GM12878 (cell line): ENCODE measurements at regions of chr15 and their contacts with region 1.

Region 1: GRCh38 chr15:94582369-94582768 is 351.0 kb downstream of the MCTP2 start:
- DNase-seq: peak; percentile 9
- ATAC-seq: peak; percentile 71
- H3K4me3 ChIP-seq: no peak overlapping the region
- H3K27ac ChIP-seq: no peak overlapping the region
- H3K4me1 ChIP-seq: peaks cover 17% of the 10 kb centered on the region; the same call in 1 of the 2 replicates
- H3K27me3 ChIP-seq: no peaks in the 10 kb centered on the region; a peak in 2 of 4 replicates
- CTCF ChIP-seq: peak; percentile 43 to 65 (median 48); a peak in 4 of 6 replicates
- EP300 ChIP-seq: no peak
- POLR2A ChIP-seq: no peak
- RAD21 ChIP-seq: peak; percentile 54

Region 2: DNA sequence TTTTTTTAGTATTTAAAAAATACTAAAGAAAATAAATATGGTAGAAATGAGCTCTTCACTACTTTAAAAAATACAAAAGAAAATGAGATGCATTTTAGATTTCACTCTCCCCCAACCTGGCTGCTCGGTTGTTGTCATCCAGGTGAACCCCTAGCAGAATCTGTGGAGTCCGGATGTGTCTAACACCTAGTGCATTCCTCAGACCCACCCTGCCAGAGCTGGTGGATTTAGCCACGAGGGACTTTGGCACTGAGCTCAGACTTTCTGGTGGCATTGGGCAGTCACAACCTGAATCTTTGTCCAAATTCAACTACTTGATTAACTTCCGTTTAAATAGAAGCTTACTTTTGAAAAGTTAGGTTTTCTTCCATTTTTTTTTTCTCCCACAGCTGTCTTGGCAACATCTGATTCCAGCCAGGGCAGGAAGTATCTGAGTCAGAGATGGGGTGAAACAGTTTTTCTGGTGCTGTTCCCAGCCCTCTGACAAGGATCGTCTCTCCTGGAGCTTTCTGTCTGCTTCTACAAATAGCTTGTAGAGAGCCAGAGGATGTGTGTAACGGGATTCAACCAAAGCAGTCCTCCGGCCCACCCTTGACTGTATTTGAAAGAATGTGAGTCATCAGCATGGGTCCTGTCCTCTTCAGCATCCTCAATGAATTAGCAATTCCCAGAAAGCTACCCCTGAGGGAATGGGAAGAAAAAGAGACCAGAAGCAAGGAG is 652.8 kb before region 1 on chr15:
- CTCF ChIA-PET with region 1: no interaction called
- POLR2A ChIA-PET with region 1: no interaction called
- RAD21 ChIA-PET with region 1: no interaction called
- SMC1A ChIA-PET with region 1: no interaction called
- in situ Hi-C with region 1: no loop called
- intact Hi-C with region 1: no loop called
- DNase-seq: no peak
- ATAC-seq: no peak
- H3K4me3 ChIP-seq: no peak overlapping the region
- H3K27ac ChIP-seq: no peak overlapping the region
- H3K4me1 ChIP-seq: peaks cover 6% of the 10 kb centered on the region
- H3K27me3 ChIP-seq: no peaks in the 10 kb centered on the region
- CTCF ChIP-seq: no peak
- EP300 ChIP-seq: no peak
- POLR2A ChIP-seq: no peak
- RAD21 ChIP-seq: no peak

Region 3: DNA sequence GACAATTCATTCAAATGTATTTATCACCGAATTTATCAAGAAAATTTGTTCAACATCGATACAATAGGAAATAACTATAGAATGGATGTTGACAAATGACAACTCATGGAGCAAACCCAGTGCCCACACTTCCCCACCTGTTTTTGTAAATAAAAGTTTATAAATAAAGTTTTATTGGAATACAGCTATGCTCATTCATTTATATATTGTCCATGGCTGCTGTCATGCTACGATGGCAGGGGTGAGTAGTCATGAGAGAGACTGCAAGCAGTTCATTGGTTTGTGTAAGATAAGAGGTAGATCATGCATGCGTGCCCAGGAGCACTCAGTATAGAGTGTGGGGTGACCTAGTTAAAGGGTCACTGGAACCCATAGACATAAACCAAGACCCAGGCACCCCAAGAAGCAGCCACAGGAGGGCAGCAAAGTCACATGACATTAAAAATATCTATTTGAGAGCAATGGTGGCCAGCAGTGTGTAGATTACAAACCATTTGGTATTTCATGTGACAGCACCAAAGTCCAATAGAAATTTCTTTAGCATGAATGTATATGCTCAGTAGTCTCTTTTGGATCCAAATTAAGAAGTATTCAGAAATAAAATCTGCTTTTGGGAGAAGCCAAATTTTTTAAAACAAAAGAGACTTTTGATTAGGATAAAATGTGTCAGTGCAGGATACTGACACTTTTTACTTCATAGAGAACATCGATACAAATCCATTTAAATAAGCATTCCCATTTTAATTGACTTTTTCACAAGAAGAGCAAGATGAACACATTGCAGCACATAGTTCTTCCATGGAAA is 443.8 kb after region 1 on chr15:
- CTCF ChIA-PET with region 1: interaction called, 11 read pairs
- POLR2A ChIA-PET with region 1: no interaction called
- RAD21 ChIA-PET with region 1: interaction called, 3 read pairs
- SMC1A ChIA-PET with region 1: interaction called, 11 read pairs
- in situ Hi-C with region 1: no loop called
- intact Hi-C with region 1: loop called (anchors 5 kb)
- DNase-seq: no peak
- ATAC-seq: peak; percentile 95
- H3K4me3 ChIP-seq: no peak overlapping the region
- H3K27ac ChIP-seq: no peak overlapping the region
- H3K4me1 ChIP-seq: no peaks in the 10 kb centered on the region
- H3K27me3 ChIP-seq: no peaks in the 10 kb centered on the region
- CTCF ChIP-seq: peak; percentile 22 to 61 (median 38); a peak in 5 of 6 replicates
- EP300 ChIP-seq: no peak
- POLR2A ChIP-seq: no peak
- RAD21 ChIP-seq: peak; percentile 40; the same call in 1 of the 2 replicates

Region 4: DNA sequence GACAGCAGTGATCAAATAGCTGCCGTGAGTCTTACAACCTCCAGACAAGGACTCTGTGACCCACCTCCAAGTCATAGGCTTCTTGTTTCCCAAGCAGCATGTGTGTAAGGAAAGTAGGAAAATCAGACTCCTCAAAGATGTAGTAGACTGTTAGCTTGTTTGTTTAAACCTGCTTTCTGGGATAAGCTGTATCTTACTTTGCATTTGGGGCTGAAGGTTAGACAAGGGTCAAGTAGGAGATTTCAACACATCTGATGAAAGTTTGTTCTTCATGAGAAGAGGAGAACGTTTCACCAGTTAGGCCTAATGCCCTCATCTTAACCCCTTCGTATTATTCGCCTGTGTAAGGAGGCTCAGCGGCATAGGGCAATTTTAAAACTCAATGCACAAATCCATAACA is 991.7 kb after region 1 on chr15:
- CTCF ChIA-PET with region 1: no interaction called
- POLR2A ChIA-PET with region 1: no interaction called
- RAD21 ChIA-PET with region 1: no interaction called
- SMC1A ChIA-PET with region 1: no interaction called
- in situ Hi-C with region 1: no loop called
- intact Hi-C with region 1: no loop called
- DNase-seq: no peak
- ATAC-seq: no peak
- H3K4me3 ChIP-seq: no peak overlapping the region
- H3K27ac ChIP-seq: no peak overlapping the region
- H3K4me1 ChIP-seq: no peaks in the 10 kb centered on the region
- H3K27me3 ChIP-seq: no peaks in the 10 kb centered on the region
- CTCF ChIP-seq: no peak
- EP300 ChIP-seq: no peak
- POLR2A ChIP-seq: no peak
- RAD21 ChIP-seq: no peak